Activated T-helper 2 cell treated with anti-CD3 and anti-CD28 coated beads, Interferon-gamma antibody, Interleukin-2, Interleukin-4, amounts not matched to agents 10 μg/mL and 5 μg/mL and 100 μg/mL, durations not matched to agents 14 hours and 24 hours and 36 hours (primary cell): ENCODE measurements at regions of chr11 and their contacts with region 1.

Region 1: DNA sequence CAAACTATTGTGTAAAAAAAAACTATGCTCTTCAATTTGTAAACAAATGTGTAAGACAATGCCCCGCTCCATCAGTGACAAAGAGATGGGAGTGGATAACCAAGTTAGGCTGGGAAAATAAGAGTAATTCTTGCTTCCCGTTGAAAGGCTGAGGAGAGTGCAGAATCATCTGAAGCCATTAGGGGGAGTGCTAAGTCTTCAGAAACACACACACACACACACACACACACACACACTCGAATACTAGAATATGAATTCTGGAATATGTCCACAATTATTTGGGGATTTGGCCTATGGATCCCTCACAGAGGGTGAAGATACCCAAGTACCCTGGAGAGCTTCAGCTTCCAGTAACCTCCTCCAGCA is 27.8 kb upstream of the ROBO3 start:
- DNase-seq: no peak
- H3K4me3 Mint-ChIP-seq: no peak overlapping the region
- H3K27ac Mint-ChIP-seq: no peak overlapping the region
- H3K4me1 Mint-ChIP-seq: peaks cover 14% of the 10 kb centered on the region
- H3K27me3 Mint-ChIP-seq: peaks cover 58% of the 10 kb centered on the region

Region 2: DNA sequence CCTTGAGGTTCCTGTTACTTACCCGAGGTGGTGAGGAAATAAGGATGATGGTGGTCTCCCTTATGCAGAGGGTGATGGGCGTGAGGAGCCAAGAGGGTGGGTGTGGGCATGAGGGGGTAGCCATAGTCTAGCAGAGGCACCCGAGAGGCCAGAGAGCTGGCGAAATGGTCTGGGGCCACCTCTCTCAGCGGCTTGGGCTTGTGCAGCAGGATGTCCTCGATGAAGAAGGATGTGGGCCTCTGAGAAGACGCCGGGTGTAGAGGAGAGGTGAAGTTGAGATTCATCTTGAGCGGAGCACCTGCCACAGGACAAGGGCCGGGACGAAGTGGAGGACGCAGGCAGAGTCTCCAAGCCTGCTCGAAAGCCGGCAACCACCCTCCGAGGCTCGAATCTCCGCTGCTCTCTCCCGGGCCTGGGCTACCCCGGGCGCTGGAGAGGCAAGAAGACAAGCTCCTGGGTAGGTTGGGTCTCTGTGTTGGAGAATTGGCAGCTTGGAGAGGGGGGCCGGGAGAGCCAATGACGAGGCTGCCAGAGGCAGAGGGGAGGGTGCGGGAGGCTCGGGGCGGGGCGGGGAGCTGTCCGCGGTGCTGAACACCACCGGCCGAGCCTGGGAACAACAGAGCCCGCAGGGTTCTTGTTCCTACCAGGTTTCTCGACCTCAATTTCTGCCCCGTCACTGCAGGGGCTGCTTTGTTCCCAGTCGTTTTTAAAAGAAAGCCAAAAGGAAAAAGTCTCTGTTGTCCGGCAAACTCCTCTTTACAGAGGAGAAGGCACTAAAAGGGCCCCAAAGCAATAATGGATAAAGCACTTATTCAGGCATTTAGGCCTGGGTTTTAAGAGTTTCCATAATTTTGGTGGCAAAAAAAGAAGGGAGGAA is 1855.8 kb before region 1 on chr11 and contains the start of gene BSX:
- intact Hi-C with region 1: loop called (anchors 5 kb)
- DNase-seq: peak; percentile 40
- H3K4me3 Mint-ChIP-seq: no peak within 1 kb of the TSS
- H3K27ac Mint-ChIP-seq: no peak within 1 kb of the TSS
- H3K4me1 Mint-ChIP-seq: peaks cover 10% of the 10 kb centered on the region
- H3K27me3 Mint-ChIP-seq: peaks cover 89% of the 10 kb centered on the region
- total RNA-seq, gene BSX: not detected in 2 replicates

Region 3: DNA sequence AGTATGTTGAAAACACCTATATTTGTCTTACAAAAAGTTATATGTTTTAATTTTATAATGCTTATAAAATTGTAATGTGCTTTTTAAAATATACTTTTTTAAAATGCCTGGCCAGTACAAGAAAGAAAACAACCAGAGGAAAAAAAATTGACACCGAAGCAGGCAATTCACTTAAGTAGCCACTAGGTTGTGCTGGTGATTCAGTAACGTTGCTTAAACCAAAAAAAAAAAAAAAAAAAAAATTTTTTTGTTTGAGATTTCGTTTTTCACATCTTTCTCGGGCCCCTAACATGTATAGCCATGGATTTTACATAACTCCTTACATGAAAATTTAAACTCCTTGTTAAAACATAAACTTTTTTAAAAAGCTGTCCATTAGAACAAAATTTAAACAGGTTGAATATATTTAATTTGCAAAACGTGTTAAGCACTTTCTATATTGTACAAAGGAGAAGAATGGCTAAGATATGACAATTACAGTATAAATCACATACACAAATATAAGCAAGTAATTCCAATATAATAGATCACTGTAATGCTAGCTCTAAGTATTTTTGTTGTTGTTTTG is 422.0 kb before region 1 on chr11:
- intact Hi-C with region 1: loop called (anchors 5 kb)
- DNase-seq: no peak
- H3K4me3 Mint-ChIP-seq: no peak overlapping the region
- H3K27ac Mint-ChIP-seq: no peak overlapping the region
- H3K4me1 Mint-ChIP-seq: no peaks in the 10 kb centered on the region
- H3K27me3 Mint-ChIP-seq: peaks cover 14% of the 10 kb centered on the region

Region 4: DNA sequence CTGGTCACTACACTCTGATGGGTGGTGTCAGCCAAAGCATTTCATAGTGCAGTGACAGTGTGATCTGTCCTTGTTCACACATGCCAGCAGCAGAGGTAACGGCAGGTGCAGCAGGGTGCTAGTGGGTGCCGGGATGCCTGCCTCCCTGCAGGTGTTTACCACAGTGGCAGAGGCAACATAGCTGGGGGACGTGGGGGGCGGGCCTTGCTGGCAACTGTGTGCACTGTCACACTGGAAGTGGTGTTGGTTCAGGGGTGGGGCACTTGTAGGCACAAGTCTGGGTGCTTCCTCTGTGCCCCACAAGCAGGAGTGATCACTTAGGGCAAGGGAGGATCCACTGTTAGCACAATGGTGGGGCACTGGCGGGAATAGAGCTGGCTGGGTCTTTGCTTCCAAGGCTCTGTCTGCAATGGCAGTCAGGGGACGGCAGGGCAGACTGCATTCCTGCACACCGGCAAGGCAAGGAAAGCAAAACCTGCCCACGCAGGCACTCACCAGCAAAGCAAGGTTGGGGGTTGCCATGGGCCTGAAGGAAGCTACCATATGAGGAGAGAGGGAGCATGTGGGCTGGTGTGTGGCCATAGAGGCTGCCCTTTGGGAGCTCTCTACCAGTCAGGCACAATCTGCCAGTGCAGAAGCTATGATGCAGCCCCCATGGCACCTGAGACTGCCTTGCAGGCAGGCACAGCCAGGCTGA is 327.3 kb before region 1 on chr11:
- intact Hi-C with region 1: no loop called
- DNase-seq: no peak
- H3K4me3 Mint-ChIP-seq: no peak overlapping the region
- H3K27ac Mint-ChIP-seq: no peak overlapping the region
- H3K4me1 Mint-ChIP-seq: no peaks in the 10 kb centered on the region
- H3K27me3 Mint-ChIP-seq: no peaks in the 10 kb centered on the region

Region 5: DNA sequence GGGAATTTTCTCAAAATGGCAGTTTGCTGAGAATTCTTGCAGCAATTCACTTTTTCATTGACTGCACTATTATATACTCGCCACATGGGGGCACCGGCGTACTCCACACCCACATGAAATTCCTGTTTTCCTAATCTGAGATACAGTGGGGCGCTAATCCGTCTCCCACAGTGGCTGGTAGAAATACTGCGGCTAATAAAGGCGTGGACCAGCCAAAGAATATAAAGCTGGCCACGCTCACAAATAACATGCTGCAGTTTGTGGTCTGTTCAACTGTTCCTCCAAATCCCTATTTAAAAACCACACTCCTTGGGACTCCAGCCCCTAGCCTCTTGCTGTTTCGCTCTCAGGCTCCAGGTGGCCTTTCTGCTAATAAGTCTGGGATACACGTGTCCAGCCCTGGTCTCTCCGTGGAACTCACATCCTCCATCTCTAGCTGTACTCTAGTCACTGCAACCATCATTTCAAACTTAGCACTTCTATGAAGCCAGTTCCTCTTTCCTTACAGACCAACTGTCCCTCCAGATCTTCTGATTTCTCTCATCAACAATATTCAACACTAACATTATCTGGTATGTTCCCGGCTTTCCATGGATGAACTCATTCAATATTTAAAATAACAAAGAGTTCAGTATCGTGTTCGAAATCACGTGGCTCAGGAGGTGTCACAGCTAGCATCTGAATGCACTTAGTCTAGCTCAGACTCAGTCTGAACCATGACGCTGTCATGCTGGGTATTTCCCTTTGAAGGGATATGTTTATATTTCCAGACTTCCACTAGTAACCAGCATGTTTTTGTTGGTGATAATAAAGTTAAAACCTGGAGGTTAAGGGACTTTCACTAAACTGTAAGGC is 192.8 kb before region 1 on chr11:
- intact Hi-C with region 1: loop called (anchors 1 kb)
- DNase-seq: no peak
- H3K4me3 Mint-ChIP-seq: no peak overlapping the region
- H3K27ac Mint-ChIP-seq: no peak overlapping the region
- H3K4me1 Mint-ChIP-seq: peaks cover 12% of the 10 kb centered on the region
- H3K27me3 Mint-ChIP-seq: no peaks in the 10 kb centered on the region

Region 6: GRCh38 chr11:124758317-124759203 is 78.9 kb before region 1 on chr11:
- intact Hi-C with region 1: loop called (anchors 2 kb)
- DNase-seq: peak; percentile 64
- H3K4me3 Mint-ChIP-seq: peak overlapping the region; percentile 62
- H3K27ac Mint-ChIP-seq: no peak overlapping the region
- H3K4me1 Mint-ChIP-seq: peaks cover 16% of the 10 kb centered on the region
- H3K27me3 Mint-ChIP-seq: peaks cover 59% of the 10 kb centered on the region

Region 7: GRCh38 chr11:124800226-124800929 is 37.1 kb before region 1 on chr11 and contains the start of gene MSANTD2:
- intact Hi-C with region 1: loop called (anchors 1 kb)
- DNase-seq: peak; percentile 76
- H3K4me3 Mint-ChIP-seq: peak within 1 kb of the TSS; percentile 92
- H3K27ac Mint-ChIP-seq: peak within 1 kb of the TSS; percentile 80
- H3K4me1 Mint-ChIP-seq: peaks cover 27% of the 10 kb centered on the region
- H3K27me3 Mint-ChIP-seq: peaks cover 11% of the 10 kb centered on the region
- total RNA-seq, gene MSANTD2: 10.5 and 10.8 TPM in 2 replicates

Region 8: GRCh38 chr11:124865921-124866583 is 28.6 kb after region 1 on chr11:
- intact Hi-C with region 1: loop called (anchors 1 kb)
- DNase-seq: peak; percentile 41
- H3K4me3 Mint-ChIP-seq: no peak overlapping the region
- H3K27ac Mint-ChIP-seq: no peak overlapping the region
- H3K4me1 Mint-ChIP-seq: peaks cover 9% of the 10 kb centered on the region
- H3K27me3 Mint-ChIP-seq: peaks cover 93% of the 10 kb centered on the region